Activated T-helper 1 cell treated with anti-CD3 and anti-CD28 coated beads, Interleukin-12 subunit alpha, Interleukin-12 subunit beta, Interleukin-2, Interleukin-4 antibody, amounts not matched to agents 30 ng/mL and 10 ng/mL and 1 ng/mL, durations not matched to agents 14 hours and 24 hours and 36 hours (primary cell): ENCODE measurements at regions of chr2 and their contacts with region 1.

Region 1: DNA sequence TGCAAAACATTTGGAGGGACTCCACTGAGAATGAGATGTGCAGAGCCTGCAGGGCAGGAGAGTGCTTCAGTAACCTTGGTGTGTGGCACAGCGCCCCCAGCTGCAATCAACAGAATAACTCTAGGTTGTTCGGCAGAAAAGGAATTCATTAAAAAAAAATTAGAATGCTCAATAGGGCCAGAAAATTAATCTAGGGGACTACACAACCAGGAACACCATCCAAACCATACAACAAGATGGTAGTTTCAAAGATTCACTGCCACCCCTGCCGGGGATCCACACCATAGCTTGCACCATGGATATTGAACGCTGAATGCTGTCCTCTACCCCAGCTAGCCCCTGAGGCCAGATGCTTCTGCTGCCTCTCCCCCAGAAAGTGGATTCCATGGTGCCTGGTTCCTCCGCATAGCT is 50.1 kb downstream of the THUMPD2 start:
- DNase-seq: no peak
- H3K4me3 Mint-ChIP-seq: no peak overlapping the region
- H3K27ac Mint-ChIP-seq: no peak overlapping the region
- H3K4me1 Mint-ChIP-seq: no peaks in the 10 kb centered on the region
- H3K27me3 Mint-ChIP-seq: peaks cover 2% of the 10 kb centered on the region

Region 2: DNA sequence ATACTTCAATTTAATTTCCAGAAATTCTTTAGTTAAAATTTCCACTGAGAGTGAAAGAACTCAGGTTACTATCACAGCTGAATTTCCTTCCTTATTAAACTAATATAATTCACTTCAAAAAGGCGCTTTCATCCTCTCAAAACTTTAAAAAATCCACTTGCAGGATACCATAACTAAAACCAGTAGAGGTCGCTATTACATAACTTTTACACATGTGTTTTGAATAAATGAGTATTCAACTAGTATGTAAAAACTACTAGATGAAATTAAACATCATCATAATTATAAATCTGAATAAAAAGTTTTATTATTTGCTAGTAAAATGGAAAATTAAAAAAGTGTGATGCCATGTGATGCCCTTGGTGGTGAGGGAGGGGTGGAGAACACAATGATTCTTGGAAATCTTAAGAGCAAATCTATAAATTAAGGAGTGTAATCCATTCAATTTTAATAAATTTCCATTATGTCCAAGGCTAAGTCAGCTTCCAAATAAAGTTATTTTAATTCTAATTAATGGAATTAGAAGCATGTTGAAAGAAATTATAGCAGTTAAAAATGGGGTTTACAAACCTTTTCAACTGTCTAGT is 669.5 kb before region 1 on chr2:
- intact Hi-C with region 1: loop called (anchors 10 kb)
- DNase-seq: no peak
- H3K4me3 Mint-ChIP-seq: no peak overlapping the region
- H3K27ac Mint-ChIP-seq: no peak overlapping the region
- H3K4me1 Mint-ChIP-seq: peaks cover 24% of the 10 kb centered on the region
- H3K27me3 Mint-ChIP-seq: no peaks in the 10 kb centered on the region

Region 3: DNA sequence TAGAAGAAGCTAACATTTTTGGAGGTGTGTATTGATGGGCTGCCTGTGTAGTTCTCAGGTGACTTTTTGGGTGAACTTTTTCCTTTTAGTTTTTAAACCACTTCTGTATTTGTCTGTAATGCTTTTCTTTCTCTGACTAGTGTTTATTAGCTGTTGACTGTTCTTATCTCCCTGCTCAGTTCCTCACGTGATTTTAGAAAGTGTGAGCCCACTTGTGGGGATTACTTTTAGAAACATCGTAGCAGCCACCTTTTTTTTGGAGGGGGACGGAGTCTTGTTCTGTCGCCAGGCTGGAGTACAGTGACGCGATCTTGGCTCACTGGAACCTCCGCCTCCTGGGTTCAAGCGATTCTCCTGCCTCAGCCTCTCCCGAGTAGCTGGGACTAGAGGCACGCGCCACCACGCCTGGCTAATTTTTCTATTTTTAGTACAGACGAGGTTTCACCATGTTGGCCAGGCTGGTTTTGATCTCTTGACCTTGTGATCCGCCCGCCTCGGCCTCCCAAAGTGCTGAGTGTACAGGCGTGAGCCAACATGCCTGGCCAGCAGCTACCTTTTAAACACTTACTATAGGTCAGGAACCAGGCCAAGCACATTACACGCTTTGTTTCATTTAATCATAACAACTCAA is 475.9 kb before region 1 on chr2:
- intact Hi-C with region 1: loop called (anchors 10 kb)
- DNase-seq: no peak
- H3K4me3 Mint-ChIP-seq: no peak overlapping the region
- H3K27ac Mint-ChIP-seq: no peak overlapping the region
- H3K4me1 Mint-ChIP-seq: no peaks in the 10 kb centered on the region
- H3K27me3 Mint-ChIP-seq: no peaks in the 10 kb centered on the region

Region 4: GRCh38 chr2:39436592-39437510 is 292.1 kb before region 1 on chr2 and contains the start of gene MAP4K3:
- intact Hi-C with region 1: loop called (anchors 5 kb)
- DNase-seq: peak; percentile 65
- H3K4me3 Mint-ChIP-seq: peak within 1 kb of the TSS; percentile 96
- H3K27ac Mint-ChIP-seq: peak within 1 kb of the TSS; percentile 86
- H3K4me1 Mint-ChIP-seq: peaks cover 51% of the 10 kb centered on the region
- H3K27me3 Mint-ChIP-seq: no peaks in the 10 kb centered on the region
- total RNA-seq, gene MAP4K3: 15.7 and 24.1 TPM in 2 replicates

Region 5: DNA sequence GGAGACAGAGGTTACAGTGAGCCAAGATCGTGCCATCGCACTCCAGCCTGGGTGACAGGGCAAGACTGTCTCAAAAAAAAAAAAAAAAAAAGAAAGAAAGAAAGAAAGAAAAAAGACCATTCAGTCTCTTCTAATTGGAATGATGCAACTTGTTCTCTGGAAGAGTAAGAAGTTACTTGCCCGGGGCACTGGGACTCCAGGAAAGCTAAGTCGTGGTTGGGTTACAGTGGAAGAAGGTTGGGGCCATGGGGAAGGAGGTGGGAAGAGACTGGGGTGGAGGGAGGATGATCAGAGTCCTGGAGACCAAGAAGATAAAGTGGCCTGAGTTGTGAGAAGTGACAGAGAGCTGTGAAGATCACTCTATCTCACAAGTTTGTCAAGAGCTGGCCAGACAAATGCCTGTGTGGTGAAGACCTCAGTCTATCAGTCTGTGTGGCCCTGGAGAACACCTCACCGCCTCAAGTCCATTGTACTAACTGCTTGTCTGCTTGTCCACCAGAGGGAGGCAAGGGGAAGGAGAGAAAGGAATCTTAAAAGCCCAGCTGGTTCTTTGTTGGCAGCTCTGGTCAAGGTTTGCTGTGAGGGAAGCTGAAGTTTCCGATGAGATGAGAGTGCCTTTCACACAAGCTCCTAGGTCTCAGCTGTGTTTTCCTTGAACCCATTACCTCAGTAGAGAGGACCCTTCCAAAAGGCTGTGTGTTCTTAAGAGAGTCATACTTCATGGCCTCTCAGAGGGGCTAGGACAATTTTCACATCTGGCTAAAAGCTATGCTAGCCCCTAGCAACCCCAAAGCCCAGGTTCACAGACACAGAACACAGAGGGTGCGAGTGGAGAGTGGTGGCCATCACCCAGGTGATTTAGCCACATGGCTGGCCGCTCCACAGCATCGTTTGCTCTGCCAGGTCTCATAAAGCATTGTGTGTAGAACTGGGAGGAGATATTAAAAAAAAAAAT is 135.2 kb before region 1 on chr2:
- intact Hi-C with region 1: loop called (anchors 5 kb)
- DNase-seq: no peak
- H3K4me3 Mint-ChIP-seq: no peak overlapping the region
- H3K27ac Mint-ChIP-seq: no peak overlapping the region
- H3K4me1 Mint-ChIP-seq: no peaks in the 10 kb centered on the region
- H3K27me3 Mint-ChIP-seq: no peaks in the 10 kb centered on the region

Region 6: DNA sequence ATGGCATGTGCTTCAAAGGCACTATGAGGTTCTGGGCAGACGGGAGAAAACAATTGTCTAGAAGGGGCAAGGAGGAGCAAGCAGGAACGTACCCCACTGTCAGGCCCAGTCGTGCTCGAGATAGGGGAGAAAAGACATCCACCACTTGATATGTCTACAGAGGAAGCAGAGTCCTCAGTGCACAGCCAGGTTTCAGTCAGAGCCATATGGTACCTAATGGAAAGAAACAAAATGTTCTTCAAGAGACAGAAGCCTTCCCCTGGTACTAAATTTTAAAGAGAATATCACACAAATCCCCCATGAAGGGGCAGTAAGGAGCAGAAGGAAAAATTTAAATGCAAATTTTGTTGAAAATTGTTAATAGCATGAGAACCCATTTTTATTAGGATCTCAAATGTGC is 28.2 kb after region 1 on chr2:
- intact Hi-C with region 1: no loop called
- DNase-seq: no peak
- H3K4me3 Mint-ChIP-seq: no peak overlapping the region
- H3K27ac Mint-ChIP-seq: no peak overlapping the region
- H3K4me1 Mint-ChIP-seq: no peaks in the 10 kb centered on the region
- H3K27me3 Mint-ChIP-seq: no peaks in the 10 kb centered on the region

Region 7: GRCh38 chr2:39816845-39817244 is 87.9 kb after region 1 on chr2:
- intact Hi-C with region 1: no loop called
- DNase-seq: no peak
- H3K4me3 Mint-ChIP-seq: no peak overlapping the region
- H3K27ac Mint-ChIP-seq: no peak overlapping the region
- H3K4me1 Mint-ChIP-seq: no peaks in the 10 kb centered on the region
- H3K27me3 Mint-ChIP-seq: no peaks in the 10 kb centered on the region

Region 8: DNA sequence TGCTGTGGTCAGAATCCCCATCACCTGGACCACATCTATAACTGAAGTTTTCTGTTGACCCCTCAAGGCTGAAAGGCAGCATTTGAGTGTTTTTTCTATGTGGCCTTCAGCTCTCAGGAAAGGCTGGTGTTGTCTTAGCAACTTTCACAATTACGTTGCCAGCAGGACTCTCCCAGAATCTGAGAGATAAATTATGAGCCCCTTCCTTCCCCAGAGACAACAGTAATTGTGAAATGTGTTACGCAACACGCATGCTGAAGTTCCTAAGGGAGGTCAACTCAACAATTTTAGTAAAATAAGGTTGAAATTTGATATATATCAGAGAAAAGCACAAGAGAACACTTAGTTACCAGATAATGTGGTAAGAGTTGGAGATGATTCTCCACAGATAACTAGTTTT is 939.5 kb after region 1 on chr2:
- intact Hi-C with region 1: no loop called
- DNase-seq: no peak
- H3K4me3 Mint-ChIP-seq: no peak overlapping the region
- H3K27ac Mint-ChIP-seq: no peak overlapping the region
- H3K4me1 Mint-ChIP-seq: no peaks in the 10 kb centered on the region
- H3K27me3 Mint-ChIP-seq: no peaks in the 10 kb centered on the region